Activated CD4-positive, alpha-beta memory T cell treated with anti-CD3 and anti-CD28 coated beads, Interleukin-2, amount 10 ng/mL, durations not matched to agents 7 days and 5 days (primary cell): ENCODE measurements at regions of chr9 and their contacts with region 1.

Region 1: GRCh38 chr9:36190388-36191287 is at the start of gene CLTA:
- DNase-seq: peak; percentile 96
- H3K4me3 Mint-ChIP-seq: peak within 1 kb of the TSS; percentile 82
- H3K27ac Mint-ChIP-seq: peak within 1 kb of the TSS; percentile 77
- H3K4me1 Mint-ChIP-seq: peaks cover 66% of the 10 kb centered on the region
- H3K27me3 Mint-ChIP-seq: peaks cover 7% of the 10 kb centered on the region
- total RNA-seq, gene CLTA: 150 to 151 TPM

Region 2: GRCh38 chr9:36102742-36103495 is 87.7 kb before region 1 on chr9:
- CTCF ChIA-PET with region 1: interaction called, 61 read pairs
- POLR2A ChIA-PET with region 1: interaction called, 12 read pairs
- DNase-seq: peak; percentile 88
- H3K4me3 Mint-ChIP-seq: no peak overlapping the region
- H3K27ac Mint-ChIP-seq: no peak overlapping the region
- H3K4me1 Mint-ChIP-seq: peaks cover 8% of the 10 kb centered on the region
- H3K27me3 Mint-ChIP-seq: no peaks in the 10 kb centered on the region

Region 3: GRCh38 chr9:36148311-36149051 is 42.2 kb before region 1 on chr9:
- CTCF ChIA-PET with region 1: interaction called, 15 read pairs
- POLR2A ChIA-PET with region 1: interaction called, 31 read pairs
- DNase-seq: peak; percentile 84
- H3K4me3 Mint-ChIP-seq: no peak overlapping the region
- H3K27ac Mint-ChIP-seq: peak overlapping the region; percentile 71
- H3K4me1 Mint-ChIP-seq: peaks cover 93% of the 10 kb centered on the region
- H3K27me3 Mint-ChIP-seq: peaks cover 3% of the 10 kb centered on the region

Region 4: GRCh38 chr9:36204906-36205547 is 14.4 kb after region 1 on chr9:
- CTCF ChIA-PET with region 1: interaction called, 21 read pairs
- POLR2A ChIA-PET with region 1: interaction called, 86 read pairs
- DNase-seq: no peak
- H3K4me3 Mint-ChIP-seq: no peak overlapping the region
- H3K27ac Mint-ChIP-seq: peak overlapping the region; percentile 49
- H3K4me1 Mint-ChIP-seq: peaks cover 58% of the 10 kb centered on the region
- H3K27me3 Mint-ChIP-seq: no peaks in the 10 kb centered on the region

Region 5: DNA sequence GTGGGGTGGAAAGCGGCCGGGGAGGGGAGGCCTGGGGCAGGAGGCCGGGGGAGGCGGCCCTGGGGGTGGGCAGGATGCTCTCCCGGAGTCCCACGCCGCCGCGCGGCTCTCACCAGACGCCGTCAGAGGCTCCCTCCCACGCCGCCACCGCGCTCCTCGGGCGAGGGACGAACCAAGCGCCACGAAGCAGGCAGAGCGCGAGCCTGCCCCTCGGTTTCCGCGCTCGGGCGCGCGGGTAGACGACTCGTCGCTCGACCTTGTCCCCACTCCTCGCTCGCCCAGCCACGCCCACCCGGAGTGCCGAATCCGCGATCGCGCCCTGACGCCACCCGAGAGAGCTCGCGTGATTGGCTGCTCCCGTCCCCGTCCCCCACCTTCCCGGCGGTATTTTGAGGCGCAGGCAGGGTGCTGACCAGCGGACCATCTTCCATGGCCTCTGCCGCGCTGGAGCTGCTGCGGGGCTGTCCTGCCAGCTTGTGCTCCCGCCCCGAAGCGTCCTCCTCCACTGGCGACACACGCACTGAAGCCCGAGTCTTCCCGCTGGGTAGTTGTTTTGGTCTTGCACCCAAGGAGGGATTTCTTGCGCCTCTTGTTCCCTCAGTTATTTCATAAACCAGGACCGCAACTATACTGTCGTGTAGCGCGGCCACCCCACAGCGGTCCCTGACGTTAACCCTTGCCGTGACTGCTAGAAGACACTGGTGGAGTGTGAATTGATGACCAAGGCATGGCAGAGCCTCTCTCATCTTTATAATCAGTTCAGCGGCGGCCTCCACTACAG is 67.8 kb after region 1 on chr9 and contains the start of gene GNE:
- CTCF ChIA-PET with region 1: interaction called, 7 read pairs
- POLR2A ChIA-PET with region 1: interaction called, 45 read pairs
- DNase-seq: peak; percentile 98
- H3K4me3 Mint-ChIP-seq: peak within 1 kb of the TSS; percentile 98
- H3K27ac Mint-ChIP-seq: peak within 1 kb of the TSS; percentile 87
- H3K4me1 Mint-ChIP-seq: peaks cover 22% of the 10 kb centered on the region
- H3K27me3 Mint-ChIP-seq: no peaks in the 10 kb centered on the region
- total RNA-seq, gene GNE: 22.0 to 23.0 TPM

Region 6: DNA sequence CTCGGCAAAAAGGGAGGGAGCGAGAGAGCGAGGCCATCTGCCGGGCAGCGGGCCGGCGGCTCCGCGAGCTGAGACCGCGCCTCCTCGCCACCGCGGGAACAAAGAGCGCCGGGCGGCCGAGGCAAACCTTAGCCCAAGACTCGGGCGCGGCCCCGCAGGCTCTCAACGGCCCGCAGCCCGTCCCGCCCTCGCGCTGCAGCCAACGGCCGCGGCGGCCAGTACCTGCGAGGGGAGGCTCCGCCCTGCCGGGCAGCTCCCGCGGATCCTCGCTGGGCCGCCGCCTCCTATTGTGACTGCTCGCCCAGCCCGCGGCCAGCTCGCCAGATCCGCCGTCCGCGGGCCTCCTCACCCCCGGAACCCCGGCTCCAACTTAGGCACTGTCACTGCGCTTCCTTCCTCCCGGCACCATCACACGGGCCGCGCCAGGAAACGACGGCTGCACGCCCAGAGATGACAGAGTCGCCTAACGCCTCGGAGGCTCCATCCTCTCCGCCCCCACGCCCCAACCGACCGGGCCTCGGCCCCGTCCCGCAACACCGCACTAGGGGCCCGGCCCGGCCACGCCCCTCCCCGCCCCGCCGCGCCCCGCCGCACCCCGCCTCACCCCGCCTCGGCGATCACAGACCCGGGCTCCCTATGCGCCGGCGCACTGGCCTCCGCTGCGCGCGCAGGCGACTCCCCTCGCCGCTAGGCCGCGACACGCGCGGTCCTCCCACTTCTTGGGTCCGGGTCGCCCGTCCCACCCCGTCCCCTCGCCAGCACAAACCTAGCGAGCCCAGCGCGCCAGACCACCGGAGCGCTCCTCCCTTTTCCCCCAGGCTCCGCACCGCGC is 209.9 kb after region 1 on chr9:
- CTCF ChIA-PET with region 1: no interaction called
- POLR2A ChIA-PET with region 1: interaction called, 12 read pairs
- DNase-seq: peak; percentile 92
- H3K4me3 Mint-ChIP-seq: peak overlapping the region; percentile 88
- H3K27ac Mint-ChIP-seq: peak overlapping the region; percentile 97
- H3K4me1 Mint-ChIP-seq: peaks cover 40% of the 10 kb centered on the region
- H3K27me3 Mint-ChIP-seq: no peaks in the 10 kb centered on the region